ENCODE measurements at regions of chr1 and their contacts with region 1.

Region 1: DNA sequence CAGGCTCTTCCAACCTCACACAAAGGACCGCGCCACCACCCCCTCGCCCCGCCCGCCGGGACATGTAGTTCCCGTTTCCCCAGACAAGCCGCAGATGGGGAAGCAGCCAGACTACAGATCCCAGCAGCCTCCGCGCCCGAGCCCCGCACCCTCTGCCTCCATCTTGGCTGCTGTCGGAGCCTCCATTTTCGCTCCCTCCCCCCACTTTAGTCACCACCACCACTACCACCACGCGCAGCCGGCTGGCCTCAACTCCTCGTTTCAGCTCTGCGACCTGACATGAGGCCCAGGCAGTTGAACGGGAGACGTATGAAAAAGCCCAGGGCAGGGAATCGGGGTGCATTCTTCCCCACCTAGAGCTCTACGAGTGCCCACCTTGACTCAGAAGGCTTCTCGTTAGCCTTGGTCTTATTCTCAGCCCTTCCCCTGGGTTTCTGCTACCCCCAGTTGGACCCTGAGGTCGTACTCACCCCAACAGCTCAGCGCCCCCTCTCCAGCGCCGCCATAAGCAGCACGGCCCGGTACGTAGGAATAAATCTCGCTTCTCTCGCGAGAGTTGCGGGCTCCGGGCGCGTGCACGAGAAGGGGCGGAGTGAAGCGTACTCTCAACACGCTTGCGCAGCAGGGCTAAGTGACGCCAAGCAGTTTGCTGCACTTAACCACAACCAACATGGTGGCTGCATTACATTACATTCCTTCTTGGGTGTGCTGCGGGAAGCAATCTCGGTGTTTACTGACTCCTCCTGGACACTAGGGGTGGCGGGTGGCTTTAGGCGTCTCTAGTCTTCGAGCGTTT is at the start of gene CSDE1:
- DNase-seq: peak; percentile 98
- ATAC-seq: peak; percentile 83 to 86
- H3K4me3 ChIP-seq: peak within 1 kb of the TSS; percentile 83 to 98 (median 90)
- H3K27ac ChIP-seq: peak within 1 kb of the TSS; percentile 97 to 100 (median 98)
- H3K4me1 ChIP-seq: peaks cover 33 to 38% of the 10 kb centered on the region in 2 donors
- H3K27me3 ChIP-seq: no peaks in the 10 kb centered on the region
- CTCF ChIP-seq: peak; percentile 17 to 66 (median 61)
- POLR2A ChIP-seq: peak; percentile 95 to 96
- total RNA-seq, gene CSDE1: 2,331 to 4,024 (median 3,697) TPM

Region 2: DNA sequence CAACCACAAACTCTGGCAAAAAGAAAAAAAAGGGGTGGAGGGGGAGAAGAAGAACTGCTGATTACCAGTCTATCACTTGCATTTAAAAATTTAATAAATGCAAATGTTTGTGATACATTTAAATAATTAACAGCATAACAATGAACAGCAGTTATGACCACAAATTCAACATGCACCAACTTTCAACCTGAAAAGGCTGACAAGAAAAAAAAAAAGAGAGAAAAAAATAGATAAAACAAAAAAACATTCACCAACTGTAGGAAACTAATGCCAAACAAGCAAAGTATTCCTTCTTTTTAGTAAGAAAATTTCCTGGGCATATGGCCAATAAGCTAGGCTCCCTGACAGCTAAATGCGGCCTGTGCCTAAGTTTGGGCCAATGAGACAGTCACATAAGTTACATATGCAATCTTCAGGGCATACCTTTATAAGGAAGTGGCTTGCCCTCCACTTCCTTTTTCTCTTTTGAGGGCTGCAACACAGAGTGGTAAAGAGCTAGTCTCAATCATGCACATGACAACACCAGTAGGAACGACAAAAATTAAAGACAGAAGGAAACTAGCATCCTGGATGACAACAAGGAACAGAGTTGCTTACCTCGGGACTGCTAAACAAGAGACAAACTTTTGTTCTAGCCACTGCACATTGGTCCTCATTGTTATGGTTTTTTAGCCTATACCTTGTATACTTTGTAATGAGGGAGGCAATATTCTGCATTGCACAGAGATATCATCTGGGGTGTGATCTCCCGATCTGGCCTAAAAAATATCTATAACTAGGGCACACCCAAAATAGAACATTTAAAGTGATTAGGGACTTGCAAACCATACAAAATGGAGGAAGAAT is 974.2 kb before region 1 on chr1:
- in situ Hi-C with region 1: no loop called
- intact Hi-C with region 1: loop called (anchors 10 kb)
- DNase-seq: peak in 1 of 2 donors; percentile 24
- ATAC-seq: peak; percentile 25 to 50
- H3K4me3 ChIP-seq: peak overlapping the region in 3 of 4 donors; percentile 3 to 23 (median 19)
- H3K27ac ChIP-seq: peak overlapping the region; percentile 76 to 84 (median 80)
- H3K4me1 ChIP-seq: peaks cover 72 to 74% of the 10 kb centered on the region in 2 donors
- H3K27me3 ChIP-seq: no peaks in the 10 kb centered on the region
- CTCF ChIP-seq: no peak
- POLR2A ChIP-seq: no peak

Region 3: GRCh38 chr1:114511032-114511785 is 246.4 kb before region 1 on chr1 and contains the start of gene TRIM33:
- in situ Hi-C with region 1: loop called in 1 of 4 experiments (anchors 10 kb)
- intact Hi-C with region 1: loop called (anchors 1 kb)
- DNase-seq: peak; percentile 81 to 91
- ATAC-seq: peak; percentile 86 to 87
- H3K4me3 ChIP-seq: peak within 1 kb of the TSS; percentile 69 to 100 (median 90)
- H3K27ac ChIP-seq: peak within 1 kb of the TSS; percentile 88 to 99 (median 96)
- H3K4me1 ChIP-seq: peaks cover 41 to 42% of the 10 kb centered on the region in 2 donors
- H3K27me3 ChIP-seq: no peaks in the 10 kb centered on the region
- CTCF ChIP-seq: peak in 1 of 5 experiments; percentile 18
- POLR2A ChIP-seq: peak; percentile 87 to 90
- total RNA-seq, gene TRIM33: 17.1 to 33.0 (median 25.3) TPM

Region 4: DNA sequence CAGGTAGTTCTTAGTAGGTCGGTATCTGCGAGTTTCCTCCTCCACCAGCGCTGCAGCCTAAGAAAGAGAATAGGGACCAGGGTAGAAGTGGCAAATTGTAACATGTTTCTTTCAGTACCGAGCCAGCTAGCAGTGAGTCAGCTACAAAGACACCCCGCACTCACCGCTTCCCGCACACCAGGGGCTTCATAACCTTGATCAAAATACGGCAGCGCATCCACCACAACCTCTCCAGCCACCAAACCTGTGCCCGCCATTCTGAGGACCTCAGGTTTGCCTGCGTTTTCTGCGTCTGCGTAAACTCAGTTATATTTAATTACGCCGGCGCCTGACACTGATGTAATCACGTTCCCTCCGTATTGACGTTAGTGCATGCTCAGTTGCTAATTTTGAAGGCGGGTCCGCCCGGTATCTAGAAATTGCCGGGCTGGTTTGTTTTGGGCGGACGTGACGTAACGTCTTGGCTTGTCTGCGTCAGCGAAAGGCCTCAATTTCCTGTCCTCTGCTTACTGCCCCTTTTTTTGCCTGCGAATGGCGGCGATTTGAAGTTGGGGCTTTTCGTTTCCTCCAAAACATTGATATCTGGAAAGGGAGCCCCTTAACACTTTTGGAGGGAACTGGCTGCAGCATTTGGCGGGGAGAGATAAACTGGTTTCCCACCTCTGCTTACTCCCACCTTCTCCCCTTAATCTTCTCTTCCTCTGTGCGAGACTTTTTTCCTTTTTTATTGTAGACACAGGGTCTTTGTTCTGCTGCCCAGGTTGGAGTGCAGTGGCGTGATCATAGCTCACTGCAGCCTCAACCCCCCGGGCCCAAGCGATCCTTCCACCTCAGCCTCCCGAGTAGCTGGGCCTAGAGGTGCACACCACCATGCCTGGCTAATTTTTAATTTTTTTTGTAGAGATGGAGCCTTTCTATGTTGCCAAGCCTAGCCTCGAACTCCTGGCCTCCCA is 176.0 kb before region 1 on chr1 and contains the start of gene BCAS2:
- in situ Hi-C with region 1: loop called (anchors 10 to 25 kb)
- intact Hi-C with region 1: loop called (anchors 1 kb)
- DNase-seq: peak; percentile 95 to 97
- ATAC-seq: peak; percentile 99
- H3K4me3 ChIP-seq: peak within 1 kb of the TSS; percentile 64 to 75 (median 70)
- H3K27ac ChIP-seq: peak within 1 kb of the TSS; percentile 87 to 95 (median 92)
- H3K4me1 ChIP-seq: peaks cover 16 to 25% of the 10 kb centered on the region in 2 donors
- H3K27me3 ChIP-seq: no peaks in the 10 kb centered on the region
- CTCF ChIP-seq: no peak
- POLR2A ChIP-seq: peak; percentile 88 to 89
- total RNA-seq, gene BCAS2: 23.7 to 32.8 (median 25.2) TPM

Region 5: DNA sequence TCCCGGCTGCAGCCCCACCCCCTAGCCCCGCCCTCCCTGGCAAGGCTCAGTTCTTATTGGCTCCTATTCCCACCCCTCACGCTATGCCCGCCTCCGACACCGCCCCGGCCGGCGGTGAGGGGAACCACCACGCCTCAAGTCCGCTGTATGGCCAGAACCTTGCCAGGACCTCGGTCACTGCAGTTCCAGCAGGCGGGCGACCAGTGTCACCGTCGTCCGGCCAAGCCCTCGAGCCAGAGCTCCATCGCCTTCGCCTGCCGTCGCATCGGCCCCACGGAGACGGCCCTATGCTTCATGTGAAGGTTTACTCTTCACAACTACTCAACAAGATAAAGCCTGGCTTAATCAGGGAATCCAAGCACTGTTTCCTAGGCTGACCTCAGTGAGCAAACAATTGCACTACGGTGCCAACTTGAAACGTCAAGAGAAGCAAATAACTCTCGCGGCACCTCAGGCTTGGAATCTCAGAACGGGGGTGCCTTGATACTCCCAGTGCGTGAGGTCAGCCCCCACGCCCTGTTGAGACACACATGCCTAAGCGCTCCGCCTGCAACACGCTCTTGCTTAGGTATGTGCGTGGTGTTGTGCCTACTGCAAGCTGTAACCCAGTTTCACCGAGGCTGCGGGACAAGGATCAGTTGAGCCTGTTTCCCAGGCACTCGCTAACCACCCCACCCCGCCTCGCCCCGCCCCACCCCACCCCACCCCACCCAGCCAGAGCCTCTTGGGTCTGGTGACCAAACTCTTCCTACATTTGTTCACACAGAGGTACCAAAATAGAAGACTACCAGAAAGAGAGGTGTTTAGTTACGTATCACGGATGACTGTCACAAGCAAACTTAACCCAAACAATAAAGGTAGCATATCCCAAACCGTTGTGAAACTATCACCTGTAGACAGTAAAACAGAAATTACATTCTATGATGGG is 87.3 kb before region 1 on chr1:
- in situ Hi-C with region 1: loop called in 1 of 4 experiments (anchors 5 kb)
- intact Hi-C with region 1: loop called (anchors 1 kb)
- DNase-seq: peak; percentile 95 to 97
- ATAC-seq: peak; percentile 74 to 78
- H3K4me3 ChIP-seq: peak overlapping the region; percentile 65 to 93 (median 91)
- H3K27ac ChIP-seq: peak overlapping the region; percentile 89 to 100 (median 96)
- H3K4me1 ChIP-seq: peaks cover 15 to 40% of the 10 kb centered on the region in 2 donors
- H3K27me3 ChIP-seq: no peaks in the 10 kb centered on the region
- CTCF ChIP-seq: peak in 2 of 5 experiments; percentile 15 to 49
- POLR2A ChIP-seq: peak; percentile 86 to 95

Region 6: DNA sequence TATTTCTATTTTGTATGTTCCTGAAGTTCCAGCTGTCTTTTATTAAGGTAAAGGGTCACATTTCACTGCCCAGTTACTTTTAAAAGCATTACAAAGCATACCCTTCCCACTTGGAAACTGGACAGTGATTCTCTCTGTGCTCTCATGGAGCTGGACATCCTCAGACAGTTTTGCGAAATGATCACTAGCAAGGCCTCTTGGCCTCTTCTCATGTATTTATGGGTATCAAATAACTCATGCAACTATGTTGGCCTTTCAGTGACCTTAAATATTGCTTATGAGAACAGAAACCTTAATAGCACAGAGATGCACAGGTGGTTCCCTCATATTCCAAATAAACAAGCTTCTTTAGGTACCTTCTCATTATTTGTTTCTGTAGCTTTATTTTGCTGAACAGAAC is 54.4 kb before region 1 on chr1:
- in situ Hi-C with region 1: no loop called
- intact Hi-C with region 1: loop called (anchors 1 kb)
- DNase-seq: peak in 1 of 2 donors; percentile 63
- ATAC-seq: peak; percentile 87 to 96
- H3K4me3 ChIP-seq: no peak overlapping the region
- H3K27ac ChIP-seq: peak overlapping the region; percentile 81 to 90 (median 85)
- H3K4me1 ChIP-seq: peaks cover 42 to 55% of the 10 kb centered on the region in 2 donors
- H3K27me3 ChIP-seq: no peaks in the 10 kb centered on the region
- CTCF ChIP-seq: no peak
- POLR2A ChIP-seq: no peak

Region 7: GRCh38 chr1:115184951-115185331 is 427.3 kb after region 1 on chr1:
- in situ Hi-C with region 1: no loop called
- intact Hi-C with region 1: loop called (anchors 5 kb)
- DNase-seq: peak; percentile 74 to 89
- ATAC-seq: peak; percentile 80 to 85
- H3K4me3 ChIP-seq: peak overlapping the region; percentile 27 to 50 (median 33)
- H3K27ac ChIP-seq: peak overlapping the region; percentile 86 to 96 (median 90)
- H3K4me1 ChIP-seq: peaks cover 32 to 52% of the 10 kb centered on the region in 2 donors
- H3K27me3 ChIP-seq: no peaks in the 10 kb centered on the region
- CTCF ChIP-seq: no peak
- POLR2A ChIP-seq: peak; percentile 53 to 56

Measured in gastrocnemius medialis (tissue), 4 donors.